ENCODE measurements at regions of chr7 and their contacts with region 1.

Region 1: DNA sequence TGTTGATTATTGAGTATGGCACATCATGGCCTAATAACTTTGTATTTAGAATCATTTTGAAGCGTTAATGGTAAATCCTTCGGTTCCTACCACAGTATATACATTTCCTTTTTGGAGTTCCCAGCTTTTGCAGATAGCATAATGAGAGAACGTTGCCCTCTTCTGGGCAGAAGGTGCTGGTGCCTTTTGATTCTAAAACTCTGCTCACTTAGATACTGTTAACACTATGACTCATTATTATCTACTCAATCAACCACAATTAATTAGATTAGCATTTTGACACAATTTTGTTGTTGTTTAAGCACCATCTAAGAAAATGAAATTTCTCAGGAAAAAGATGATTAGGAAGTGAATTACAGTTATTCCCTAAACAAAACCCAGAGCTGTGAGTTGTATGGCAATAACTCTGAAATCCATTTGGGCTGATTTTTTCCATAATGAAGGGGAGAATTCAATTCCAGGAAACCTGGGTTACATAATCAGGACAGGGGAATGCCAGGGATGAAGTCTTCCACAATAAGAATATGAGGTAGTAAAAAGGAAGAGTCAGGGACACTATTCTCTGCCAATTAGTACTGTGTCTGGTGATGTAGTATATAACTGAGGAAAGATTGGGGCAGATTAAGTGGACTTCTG is 11.5 kb upstream of the DLD start:
- DNase-seq: peak; percentile 61
- ATAC-seq: peak; percentile 61
- H3K4me3 Mint-ChIP-seq: no peak overlapping the region
- H3K27ac Mint-ChIP-seq: no peak overlapping the region
- H3K4me1 Mint-ChIP-seq: peaks cover 18% of the 10 kb centered on the region
- H3K27me3 Mint-ChIP-seq: peaks cover 4% of the 10 kb centered on the region
- CTCF ChIP-seq: peak; percentile 93

Region 2: DNA sequence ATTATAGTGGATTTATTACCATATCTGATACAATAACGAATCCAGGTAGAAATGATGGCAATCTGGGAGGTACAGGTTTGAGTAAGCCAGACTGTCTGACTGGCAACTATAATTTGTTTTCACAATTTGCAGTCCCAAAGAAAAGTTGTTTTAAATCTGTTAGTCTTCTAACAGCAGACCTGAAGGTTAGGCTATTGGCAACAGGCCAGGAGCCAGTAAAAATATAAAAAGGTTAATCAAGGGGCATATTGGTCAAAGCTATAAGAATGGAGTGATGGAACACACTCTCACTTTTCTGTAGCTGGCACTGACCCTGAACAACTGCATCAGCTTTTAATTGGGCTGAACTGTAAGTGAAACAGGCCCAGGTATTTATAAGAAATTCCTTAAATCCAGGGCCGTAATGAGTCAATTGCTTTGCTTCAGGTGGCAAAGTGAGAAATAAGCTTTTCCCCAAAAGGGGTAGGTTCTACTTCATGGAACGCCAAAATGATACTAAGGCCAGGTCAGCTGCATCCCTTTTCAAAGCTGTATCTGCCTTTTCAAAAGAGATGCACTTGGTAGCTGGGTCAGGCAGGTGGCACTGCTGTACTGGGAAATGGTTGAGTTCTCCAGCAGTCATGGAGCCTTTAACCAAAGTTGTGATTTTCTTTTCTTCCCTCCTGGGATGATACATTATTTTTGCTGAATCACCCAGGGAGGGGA is 416.6 kb before region 1 on chr7:
- CTCF ChIA-PET with region 1: interaction called, 16 read pairs
- POLR2A ChIA-PET with region 1: no interaction called
- intact Hi-C with region 1: no loop called
- DNase-seq: peak; percentile 56
- ATAC-seq: peak; percentile 82
- H3K4me3 Mint-ChIP-seq: no peak overlapping the region
- H3K27ac Mint-ChIP-seq: no peak overlapping the region
- H3K4me1 Mint-ChIP-seq: no peaks in the 10 kb centered on the region
- H3K27me3 Mint-ChIP-seq: no peaks in the 10 kb centered on the region
- CTCF ChIP-seq: peak; percentile 44

Region 3: DNA sequence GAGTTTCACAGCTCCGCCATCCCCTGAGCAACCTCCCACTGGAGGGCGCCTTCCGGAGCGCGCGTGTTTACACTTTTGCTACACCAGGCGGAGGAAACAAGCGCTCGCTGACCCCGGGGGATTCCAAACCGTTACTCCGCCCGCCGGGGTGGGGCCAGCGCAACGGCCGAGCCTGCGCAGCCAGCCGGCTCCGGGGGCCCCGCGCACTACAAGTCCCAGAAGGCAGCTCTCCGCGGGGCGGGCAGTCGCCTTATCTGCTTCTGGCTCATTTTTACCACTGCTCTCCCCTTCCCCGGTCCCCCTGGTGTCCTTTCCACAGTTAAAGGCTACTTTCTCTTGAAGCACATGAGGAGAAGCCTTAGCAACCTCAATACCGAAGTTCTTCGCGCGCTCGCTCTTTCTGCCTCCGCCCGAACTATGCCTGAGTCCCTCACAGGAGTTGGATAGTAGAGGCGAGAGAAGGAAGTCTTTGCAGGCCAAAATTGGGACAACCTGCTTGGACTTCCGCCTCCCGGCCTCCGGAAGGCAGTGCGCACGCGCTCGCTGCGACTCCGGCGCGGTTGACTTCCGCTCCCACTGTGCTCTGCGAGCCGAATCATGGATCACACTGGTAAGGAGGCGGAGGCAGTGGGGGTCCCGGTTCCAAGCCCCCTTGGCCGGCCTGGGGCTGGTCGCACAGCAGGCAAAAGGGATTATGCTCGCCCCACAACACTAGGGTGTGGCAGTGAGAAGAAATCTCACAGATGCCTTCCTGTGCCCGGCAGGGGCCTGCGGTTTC is 135.8 kb before region 1 on chr7 and contains the start of gene CBLL1:
- CTCF ChIA-PET with region 1: interaction called, 117 read pairs
- POLR2A ChIA-PET with region 1: interaction called, 17 read pairs
- intact Hi-C with region 1: loop called (anchors 2 kb)
- DNase-seq: peak; percentile 99
- ATAC-seq: peak; percentile 94
- H3K4me3 Mint-ChIP-seq: peak within 1 kb of the TSS; percentile 87
- H3K27ac Mint-ChIP-seq: peak within 1 kb of the TSS; percentile 100
- H3K4me1 Mint-ChIP-seq: peaks cover 40% of the 10 kb centered on the region
- H3K27me3 Mint-ChIP-seq: no peaks in the 10 kb centered on the region
- CTCF ChIP-seq: peak; percentile 69
- total RNA-seq, gene CBLL1: 31.7 to 38.2 TPM

Region 4: DNA sequence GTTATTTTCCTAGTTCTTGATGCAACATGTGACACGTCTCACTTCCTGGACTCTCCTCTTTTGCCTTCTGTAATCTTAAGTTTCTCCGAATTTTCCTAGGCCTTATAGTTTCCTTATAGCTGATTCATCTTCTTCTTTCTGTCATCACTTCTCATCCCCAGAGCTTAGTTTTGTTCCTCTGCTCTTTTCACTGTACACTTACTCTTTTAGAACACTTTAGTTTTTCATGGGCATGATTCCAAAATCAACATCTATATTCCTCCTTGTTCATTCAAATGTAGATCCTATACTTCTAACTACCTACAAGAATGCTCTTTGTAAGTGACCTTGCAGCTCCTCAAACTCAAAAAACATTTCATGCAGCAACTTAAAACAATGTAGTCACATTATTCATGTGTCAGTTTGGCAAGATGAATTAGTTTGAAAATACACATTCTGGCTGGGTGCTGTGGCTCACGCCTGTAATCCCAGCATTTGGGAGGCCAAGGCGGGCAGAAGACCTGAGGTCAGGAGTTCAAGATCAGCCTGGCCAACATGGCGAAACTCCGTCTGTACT is 63.4 kb before region 1 on chr7:
- CTCF ChIA-PET with region 1: interaction called, 3 read pairs
- POLR2A ChIA-PET with region 1: no interaction called
- intact Hi-C with region 1: loop called (anchors 10 kb)
- DNase-seq: no peak
- ATAC-seq: no peak
- H3K4me3 Mint-ChIP-seq: no peak overlapping the region
- H3K27ac Mint-ChIP-seq: peak overlapping the region; percentile 86
- H3K4me1 Mint-ChIP-seq: peaks cover 28% of the 10 kb centered on the region
- H3K27me3 Mint-ChIP-seq: no peaks in the 10 kb centered on the region
- CTCF ChIP-seq: no peak

Region 5: DNA sequence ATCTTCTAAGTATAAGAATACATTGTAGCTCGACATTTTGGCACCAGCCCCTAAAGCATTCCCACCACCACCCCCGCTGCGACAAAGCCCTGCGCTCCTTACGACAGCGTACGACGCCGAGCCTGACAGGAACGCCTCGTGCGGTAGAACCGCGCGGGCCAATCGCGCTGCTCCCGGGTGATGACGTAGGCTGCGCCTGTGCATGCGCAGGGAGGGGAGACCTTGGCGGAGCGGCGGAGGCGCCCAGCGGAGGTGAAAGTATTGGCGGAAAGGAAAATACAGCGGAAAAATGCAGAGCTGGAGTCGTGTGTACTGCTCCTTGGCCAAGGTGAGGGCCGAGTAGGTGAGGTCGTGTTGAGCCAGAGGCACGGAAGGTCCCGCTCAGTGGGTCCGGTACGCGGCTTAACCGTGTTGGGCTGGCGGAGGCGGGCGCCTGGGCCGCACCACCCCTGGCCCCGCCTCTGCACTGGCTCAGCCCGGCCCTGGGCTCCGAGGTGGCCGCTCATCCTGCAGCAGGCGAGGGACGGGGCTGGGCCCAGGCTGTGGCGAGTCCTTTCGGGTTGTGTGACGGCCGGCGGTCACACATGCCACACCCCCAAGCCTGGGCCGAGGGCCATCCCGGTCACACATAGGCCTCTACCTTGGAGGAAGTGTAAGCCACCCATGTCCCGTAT is 11.6 kb after region 1 on chr7 and contains the start of gene DLD:
- CTCF ChIA-PET with region 1: interaction called, 48 read pairs
- POLR2A ChIA-PET with region 1: interaction called, 4 read pairs
- intact Hi-C with region 1: no loop called
- DNase-seq: peak; percentile 96
- ATAC-seq: peak; percentile 98
- H3K4me3 Mint-ChIP-seq: peak within 1 kb of the TSS; percentile 87
- H3K27ac Mint-ChIP-seq: peak within 1 kb of the TSS; percentile 97
- H3K4me1 Mint-ChIP-seq: peaks cover 36% of the 10 kb centered on the region
- H3K27me3 Mint-ChIP-seq: no peaks in the 10 kb centered on the region
- CTCF ChIP-seq: no peak
- total RNA-seq, gene DLD: 99.8 to 102 TPM